ENCODE measurements at regions of chr11 and their contacts with region 1.

Region 1: GRCh38 chr11:7098235-7098832 is 9.5 kb downstream of the RBMXL2 start:
- DNase-seq: peak in 1 of 2 experiments; percentile 54
- H3K4me3 ChIP-seq: no peak overlapping the region
- H3K4me3 Mint-ChIP-seq: no peak overlapping the region
- H3K27ac Mint-ChIP-seq: no peak overlapping the region
- H3K4me1 ChIP-seq: no peaks in the 10 kb centered on the region
- H3K4me1 Mint-ChIP-seq: no peaks in the 10 kb centered on the region
- H3K27me3 ChIP-seq: no peaks in the 10 kb centered on the region
- H3K27me3 Mint-ChIP-seq: peaks cover 3% of the 10 kb centered on the region
- CTCF ChIP-seq: peak; percentile 55 to 62

Region 2: GRCh38 chr11:6771926-6772893 is 326.1 kb before region 1 on chr11 and contains the start of gene OR2AG2:
- CTCF ChIA-PET with region 1: no interaction called
- POLR2A ChIA-PET with region 1: no interaction called
- intact Hi-C with region 1: no loop called
- DNase-seq: no peak
- H3K4me3 ChIP-seq: no peak within 1 kb of the TSS
- H3K4me3 Mint-ChIP-seq: no peak within 1 kb of the TSS
- H3K27ac Mint-ChIP-seq: no peak within 1 kb of the TSS
- H3K4me1 ChIP-seq: no peaks in the 10 kb centered on the region
- H3K4me1 Mint-ChIP-seq: no peaks in the 10 kb centered on the region
- H3K27me3 ChIP-seq: no peaks in the 10 kb centered on the region
- H3K27me3 Mint-ChIP-seq: peaks cover 8% of the 10 kb centered on the region
- CTCF ChIP-seq: no peak
- total RNA-seq, gene OR2AG2: not detected in 2 replicates

Region 3: GRCh38 chr11:7046474-7047175 is 51.7 kb before region 1 on chr11:
- CTCF ChIA-PET with region 1: no interaction called
- POLR2A ChIA-PET with region 1: no interaction called
- intact Hi-C with region 1: no loop called
- DNase-seq: no peak
- H3K4me3 ChIP-seq: no peak overlapping the region
- H3K4me3 Mint-ChIP-seq: no peak overlapping the region
- H3K27ac Mint-ChIP-seq: no peak overlapping the region
- H3K4me1 ChIP-seq: no peaks in the 10 kb centered on the region
- H3K4me1 Mint-ChIP-seq: no peaks in the 10 kb centered on the region
- H3K27me3 ChIP-seq: no peaks in the 10 kb centered on the region
- H3K27me3 Mint-ChIP-seq: peaks cover 3% of the 10 kb centered on the region
- CTCF ChIP-seq: no peak

Region 4: DNA sequence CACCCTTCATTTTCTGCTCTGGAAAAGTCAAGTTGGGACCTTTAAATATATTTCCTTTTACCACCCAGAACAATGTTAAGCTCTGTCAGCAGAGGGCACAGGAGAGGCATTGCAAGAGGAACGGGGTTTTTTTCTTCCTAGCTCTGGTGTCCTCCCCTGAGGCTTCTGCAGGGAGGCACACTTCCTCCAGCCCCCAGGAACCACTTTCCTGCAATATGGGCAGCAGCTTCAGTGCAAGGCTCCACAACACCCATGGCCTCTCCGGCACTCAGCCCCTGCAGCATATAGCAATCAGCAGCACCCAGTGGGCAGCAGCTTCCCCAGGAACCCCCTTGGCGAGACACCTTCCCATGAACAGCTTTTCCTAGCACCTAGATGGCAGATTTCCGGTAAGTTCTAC is 254.8 kb after region 1 on chr11:
- CTCF ChIA-PET with region 1: no interaction called
- POLR2A ChIA-PET with region 1: no interaction called
- intact Hi-C with region 1: loop called (anchors 1 kb)
- DNase-seq: peak; percentile 39 to 63
- H3K4me3 ChIP-seq: no peak overlapping the region
- H3K4me3 Mint-ChIP-seq: no peak overlapping the region
- H3K27ac Mint-ChIP-seq: no peak overlapping the region
- H3K4me1 ChIP-seq: no peaks in the 10 kb centered on the region
- H3K4me1 Mint-ChIP-seq: no peaks in the 10 kb centered on the region
- H3K27me3 ChIP-seq: no peaks in the 10 kb centered on the region; the same call in 1 of the 2 replicates
- H3K27me3 Mint-ChIP-seq: peaks cover 15% of the 10 kb centered on the region
- CTCF ChIP-seq: peak; percentile 63 to 76

Region 5: DNA sequence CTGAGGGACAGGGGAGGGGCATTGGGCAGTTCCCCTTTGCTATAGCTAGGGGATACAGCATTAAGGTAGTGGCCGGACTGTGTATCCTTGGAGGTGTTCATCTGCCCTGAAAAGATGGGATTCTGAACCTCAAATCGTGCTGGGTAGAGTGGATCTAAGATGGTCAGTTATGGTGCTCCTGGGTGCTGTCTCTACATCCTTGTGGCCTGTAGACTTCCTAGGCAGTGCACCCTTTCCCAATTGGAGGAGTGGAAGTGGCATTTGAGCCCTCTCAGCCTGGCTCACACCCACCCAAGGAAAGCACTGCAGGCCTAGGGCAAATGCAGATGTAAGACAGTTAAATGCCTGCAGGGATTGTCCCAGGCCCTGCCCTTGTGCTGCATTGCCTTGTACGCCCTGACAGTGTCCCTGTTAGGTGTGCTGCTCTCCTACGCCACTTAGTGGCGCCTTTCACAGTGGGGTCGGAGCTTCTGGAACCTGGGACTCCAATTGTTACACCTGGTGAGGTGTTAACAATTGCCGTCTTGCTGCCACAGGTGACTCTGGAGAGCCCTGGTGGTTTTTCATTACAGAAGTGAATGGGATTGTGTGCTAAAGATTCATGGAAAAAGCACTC is 450.4 kb after region 1 on chr11:
- CTCF ChIA-PET with region 1: no interaction called
- POLR2A ChIA-PET with region 1: no interaction called
- intact Hi-C with region 1: loop called (anchors 5 kb)
- DNase-seq: peak; percentile 70 to 72
- H3K4me3 ChIP-seq: no peak overlapping the region
- H3K4me3 Mint-ChIP-seq: no peak overlapping the region
- H3K27ac Mint-ChIP-seq: no peak overlapping the region
- H3K4me1 ChIP-seq: peaks cover 13% of the 10 kb centered on the region
- H3K4me1 Mint-ChIP-seq: peaks cover 18% of the 10 kb centered on the region
- H3K27me3 ChIP-seq: no peaks in the 10 kb centered on the region
- H3K27me3 Mint-ChIP-seq: no peaks in the 10 kb centered on the region
- CTCF ChIP-seq: peak; percentile 62 to 86

Region 6: DNA sequence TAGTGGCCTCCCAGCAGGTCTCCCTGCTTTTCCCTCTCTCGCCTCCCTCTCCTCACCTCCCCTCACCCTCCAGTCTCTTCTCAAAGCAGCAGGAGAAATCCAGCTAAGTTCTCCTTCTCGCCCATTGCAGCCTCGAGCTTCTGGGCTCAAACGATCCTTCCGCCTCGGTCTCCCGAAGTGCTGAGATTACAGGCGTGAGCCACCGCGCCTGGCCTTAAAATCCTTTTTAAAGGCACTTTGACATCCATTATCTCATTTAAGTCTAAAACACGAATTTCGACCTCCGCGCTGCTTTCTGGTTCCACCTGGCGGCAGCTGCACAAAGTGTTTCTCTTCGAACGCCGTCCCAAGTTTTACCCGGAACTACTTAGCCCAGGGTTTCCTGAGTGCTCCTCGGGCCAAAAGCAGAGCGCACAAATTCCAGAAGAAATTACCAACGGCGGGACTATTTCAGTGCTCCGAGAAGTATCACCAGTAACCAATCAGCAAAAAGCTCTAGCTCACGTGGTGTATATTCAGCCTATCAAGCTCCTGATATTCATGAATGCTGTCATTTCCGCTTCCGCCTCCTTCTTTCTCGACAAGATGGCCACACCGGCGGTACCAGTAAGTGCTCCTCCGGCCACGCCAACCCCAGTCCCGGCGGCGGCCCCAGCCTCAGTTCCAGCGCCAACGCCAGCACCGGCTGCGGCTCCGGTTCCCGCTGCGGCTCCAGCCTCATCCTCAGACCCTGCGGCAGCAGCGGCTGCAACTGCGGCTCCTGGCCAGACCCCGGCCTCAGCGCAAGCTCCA is 888.6 kb after region 1 on chr11 and contains the start of gene EIF3F:
- CTCF ChIA-PET with region 1: interaction called, 4 read pairs
- POLR2A ChIA-PET with region 1: no interaction called
- intact Hi-C with region 1: loop called (anchors 5 kb)
- DNase-seq: peak; percentile 94 to 96
- H3K4me3 ChIP-seq: peak within 1 kb of the TSS; percentile 70
- H3K4me3 Mint-ChIP-seq: peak within 1 kb of the TSS; percentile 95
- H3K27ac Mint-ChIP-seq: peak within 1 kb of the TSS; percentile 94
- H3K4me1 ChIP-seq: peaks cover 10% of the 10 kb centered on the region
- H3K4me1 Mint-ChIP-seq: peaks cover 11% of the 10 kb centered on the region
- H3K27me3 ChIP-seq: no peaks in the 10 kb centered on the region
- H3K27me3 Mint-ChIP-seq: no peaks in the 10 kb centered on the region
- CTCF ChIP-seq: peak; percentile 77 to 78
- total RNA-seq, gene EIF3F: 289 and 315 TPM in 2 replicates

Measured in Caco-2 (cell line).